ENCODE measurements at regions of chr12 and their contacts with region 1.

Region 1: DNA sequence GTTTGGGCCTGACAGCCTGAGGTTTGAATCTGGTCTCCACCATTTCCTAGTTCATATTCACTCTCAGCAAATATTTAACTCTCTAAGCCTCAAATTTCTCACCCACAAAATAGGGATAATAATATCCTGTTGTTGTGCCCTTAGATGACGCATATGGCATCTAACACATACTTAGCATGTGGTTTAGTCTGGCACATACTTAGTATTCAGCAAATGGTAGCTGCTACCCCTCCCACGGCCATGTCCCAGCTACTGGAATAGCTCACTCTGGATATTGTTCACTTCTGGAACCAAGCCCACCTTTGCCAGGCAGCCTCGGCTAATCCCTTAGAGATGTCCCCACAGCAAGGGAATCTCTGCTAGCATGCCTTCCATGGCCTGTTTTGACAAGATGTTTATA is 53.3 kb downstream of the BICD1 start:
- H3K4me3 Mint-ChIP-seq: no peak overlapping the region
- H3K27ac Mint-ChIP-seq: no peak overlapping the region
- H3K4me1 Mint-ChIP-seq: no peaks in the 10 kb centered on the region
- H3K27me3 Mint-ChIP-seq: no peaks in the 10 kb centered on the region

Region 2: GRCh38 chr12:32170437-32170998 is 10.6 kb after region 1 on chr12:
- intact Hi-C with region 1: no loop called
- H3K4me3 Mint-ChIP-seq: no peak overlapping the region
- H3K27ac Mint-ChIP-seq: no peak overlapping the region
- H3K4me1 Mint-ChIP-seq: no peaks in the 10 kb centered on the region
- H3K27me3 Mint-ChIP-seq: no peaks in the 10 kb centered on the region

Region 3: GRCh38 chr12:32264961-32265360 is 105.0 kb after region 1 on chr12:
- intact Hi-C with region 1: loop called (anchors 10 kb)
- H3K4me3 Mint-ChIP-seq: no peak overlapping the region
- H3K27ac Mint-ChIP-seq: peak overlapping the region; percentile 55
- H3K4me1 Mint-ChIP-seq: peaks cover 6% of the 10 kb centered on the region
- H3K27me3 Mint-ChIP-seq: no peaks in the 10 kb centered on the region